Natural killer cell (primary cell): ENCODE measurements at regions of chr11 and their contacts with region 1.

Region 1: GRCh38 chr11:75328426-75329277 is 22.8 kb downstream of the ARRB1 start:
- DNase-seq: peak; percentile 49 to 72
- ATAC-seq: peak; percentile 88 to 90 (median 89)
- H3K4me3 ChIP-seq: no peak overlapping the region
- H3K4me3 Mint-ChIP-seq: peak overlapping the region; percentile 72
- H3K27ac ChIP-seq: peak overlapping the region; percentile 71
- H3K27ac Mint-ChIP-seq: peak overlapping the region; percentile 58 to 90
- H3K4me1 ChIP-seq: peaks cover 46% of the 10 kb centered on the region
- H3K4me1 Mint-ChIP-seq: peaks cover 70 to 81% of the 10 kb centered on the region in 2 donors
- H3K27me3 ChIP-seq: no peaks in the 10 kb centered on the region
- H3K27me3 Mint-ChIP-seq: no peaks in the 10 kb centered on the region
- CTCF ChIP-seq: peak; percentile 23

Region 2: DNA sequence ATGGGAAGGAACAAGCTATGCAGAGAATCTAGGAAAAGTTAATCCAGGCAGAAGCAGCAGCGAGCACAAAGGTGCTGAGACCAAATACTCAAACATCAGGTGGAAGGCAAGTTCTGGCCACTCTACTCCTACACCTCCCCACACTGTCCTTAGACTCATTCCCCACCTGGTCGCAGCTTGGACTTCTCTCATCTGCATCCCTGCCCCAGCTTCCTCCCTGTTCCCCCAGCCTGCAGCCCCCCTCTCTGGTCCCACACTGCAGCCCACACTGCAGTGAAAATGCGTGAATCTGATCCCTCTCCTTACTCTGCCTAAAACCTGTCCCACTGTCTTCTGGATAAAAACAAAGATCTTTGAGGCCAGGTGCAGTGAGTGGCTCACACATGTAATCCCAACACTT is 78.9 kb before region 1 on chr11:
- intact Hi-C with region 1: no loop called
- DNase-seq: no peak
- ATAC-seq: no peak
- H3K4me3 ChIP-seq: no peak overlapping the region
- H3K4me3 Mint-ChIP-seq: no peak overlapping the region
- H3K27ac ChIP-seq: no peak overlapping the region
- H3K27ac Mint-ChIP-seq: no peak overlapping the region
- H3K4me1 ChIP-seq: peaks cover 3% of the 10 kb centered on the region
- H3K4me1 Mint-ChIP-seq: peaks cover 0 to 7% of the 10 kb centered on the region in 2 donors
- H3K27me3 ChIP-seq: peaks cover 2% of the 10 kb centered on the region
- H3K27me3 Mint-ChIP-seq: peaks cover 9 to 26% of the 10 kb centered on the region in 2 donors
- CTCF ChIP-seq: no peak

Region 3: DNA sequence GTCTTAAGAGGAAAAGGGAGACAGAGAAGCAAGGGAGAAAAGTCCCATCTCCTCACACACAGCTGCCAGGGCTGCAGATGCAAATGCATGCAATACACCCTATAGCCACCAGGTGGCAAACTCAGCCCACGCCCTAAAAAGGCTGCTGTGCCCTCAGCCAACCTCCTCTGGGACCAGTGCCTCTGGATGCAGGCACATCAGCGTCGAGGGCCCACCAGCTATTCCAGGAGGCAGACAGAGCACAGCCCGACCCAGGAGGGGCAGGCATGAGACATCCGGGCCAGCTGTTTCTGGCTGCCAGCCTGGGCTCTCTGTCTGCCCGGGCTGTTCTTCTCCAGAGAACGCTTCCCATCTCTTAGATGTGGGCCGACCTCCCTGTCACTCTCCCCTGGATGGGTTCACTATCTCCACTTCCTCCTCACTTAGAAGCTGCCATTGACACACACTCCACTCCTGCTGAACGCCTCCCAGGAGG is 48.4 kb before region 1 on chr11:
- intact Hi-C with region 1: loop called (anchors 5 kb)
- DNase-seq: peak; percentile 73 to 89
- ATAC-seq: peak; percentile 62 to 74 (median 74)
- H3K4me3 ChIP-seq: no peak overlapping the region
- H3K4me3 Mint-ChIP-seq: no peak overlapping the region
- H3K27ac ChIP-seq: no peak overlapping the region
- H3K27ac Mint-ChIP-seq: peak overlapping the region; percentile 24 to 74
- H3K4me1 ChIP-seq: peaks cover 30% of the 10 kb centered on the region
- H3K4me1 Mint-ChIP-seq: peaks cover 38 to 39% of the 10 kb centered on the region in 2 donors
- H3K27me3 ChIP-seq: no peaks in the 10 kb centered on the region
- H3K27me3 Mint-ChIP-seq: no peaks in the 10 kb centered on the region
- CTCF ChIP-seq: peak; percentile 93